Endothelial cell of umbilical vein (primary cell): ENCODE measurements at regions of chr19 and their contacts with region 1.

Region 1: GRCh38 chr19:5803752-5804515 is 933 bp upstream of the NRTN start:
- DNase-seq: peak; percentile 89
- H3K4me3 ChIP-seq: peak overlapping the region in 1 of 3 experiments; percentile 2
- H3K27ac ChIP-seq: no peak overlapping the region
- H3K4me1 ChIP-seq: peaks cover 5% of the 10 kb centered on the region
- H3K27me3 ChIP-seq: peaks cover 2 to 7% of the 10 kb centered on the region in 2 experiments
- CTCF ChIP-seq: peak; percentile 100
- POLR2A ChIP-seq: no peak

Region 2: DNA sequence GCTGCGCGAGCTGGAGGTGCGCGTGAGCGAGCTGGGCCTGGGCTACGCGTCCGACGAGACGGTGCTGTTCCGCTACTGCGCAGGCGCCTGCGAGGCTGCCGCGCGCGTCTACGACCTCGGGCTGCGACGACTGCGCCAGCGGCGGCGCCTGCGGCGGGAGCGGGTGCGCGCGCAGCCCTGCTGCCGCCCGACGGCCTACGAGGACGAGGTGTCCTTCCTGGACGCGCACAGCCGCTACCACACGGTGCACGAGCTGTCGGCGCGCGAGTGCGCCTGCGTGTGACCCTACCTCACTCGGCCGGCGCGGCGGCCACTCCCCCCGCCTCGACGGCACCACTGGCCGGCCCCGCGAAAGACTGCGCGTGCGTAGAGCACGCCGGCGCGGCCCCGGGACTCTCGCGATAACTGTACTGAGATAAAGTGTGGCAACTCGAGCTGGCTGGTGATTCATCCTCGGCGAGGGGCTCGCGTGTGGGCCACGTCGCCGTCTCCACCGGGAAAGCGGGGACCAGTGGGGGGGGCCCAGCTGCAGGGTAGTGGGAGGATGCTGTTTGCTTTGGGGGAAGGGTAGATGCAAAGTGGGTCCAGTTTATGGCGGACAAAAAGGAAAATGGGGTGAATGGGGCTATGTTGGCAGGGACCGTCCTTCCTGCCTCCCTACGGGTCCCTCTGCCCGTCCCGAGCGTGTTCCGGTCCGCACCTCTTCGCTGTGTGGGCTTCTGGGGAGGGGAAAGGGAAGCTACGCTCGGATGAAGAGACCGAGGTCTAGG is 24.1 kb after region 1 on chr19:
- CTCF ChIA-PET with region 1: interaction called, 42 read pairs
- POLR2A ChIA-PET with region 1: interaction called, 14 read pairs
- dilution Hi-C with region 1: no loop called
- intact Hi-C with region 1: loop called (anchors 2 kb)
- DNase-seq: peak; percentile 97
- H3K4me3 ChIP-seq: peak overlapping the region in 2 of 3 experiments; percentile 38 to 60
- H3K27ac ChIP-seq: peak overlapping the region; percentile 36
- H3K4me1 ChIP-seq: peaks cover 7% of the 10 kb centered on the region
- H3K27me3 ChIP-seq: peaks cover 0 to 3% of the 10 kb centered on the region in 2 experiments
- CTCF ChIP-seq: no peak
- POLR2A ChIP-seq: peak; percentile 95

Region 3: DNA sequence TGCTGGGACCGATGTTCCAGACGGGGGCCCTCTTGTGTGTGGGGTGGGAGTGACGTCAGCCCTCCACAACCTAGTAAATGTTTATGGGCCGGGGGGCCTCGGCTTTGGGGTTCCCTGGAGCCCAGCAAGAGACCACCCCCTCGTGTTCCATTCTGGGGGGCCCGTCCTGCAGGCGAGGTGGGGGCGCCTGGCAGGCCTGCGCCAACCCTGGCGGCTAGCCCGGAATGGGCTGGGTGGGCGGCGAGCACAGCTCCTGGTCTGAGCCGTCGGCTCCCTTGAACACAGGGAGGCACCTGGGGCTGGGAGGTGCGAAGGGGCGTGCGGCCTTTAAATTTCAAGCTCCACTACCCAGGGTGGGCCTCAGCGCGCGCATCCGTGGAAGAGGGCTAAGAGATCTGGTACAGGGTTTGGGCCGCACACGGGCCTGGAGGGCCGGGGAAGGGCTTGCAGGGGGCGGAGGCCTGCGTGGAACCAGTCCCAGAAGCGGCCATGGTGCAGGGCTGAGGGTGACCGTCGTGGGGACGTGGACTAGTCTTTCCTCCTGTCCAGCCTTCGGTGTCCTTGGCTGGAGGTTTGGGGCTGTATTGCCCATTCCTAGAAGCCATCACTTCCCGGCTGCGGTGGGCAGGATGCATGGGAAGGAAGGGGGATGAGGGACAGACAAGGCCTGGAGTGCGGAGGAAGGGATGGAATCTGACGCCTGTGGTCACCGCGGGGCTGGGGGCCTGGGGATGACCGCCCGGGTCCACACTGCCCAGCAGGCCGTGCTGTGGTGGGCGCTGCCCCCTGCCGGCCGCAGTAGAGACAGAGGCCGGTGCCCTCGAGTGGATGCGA is 88.2 kb after region 1 on chr19:
- CTCF ChIA-PET with region 1: interaction called, 76 read pairs
- POLR2A ChIA-PET with region 1: no interaction called
- dilution Hi-C with region 1: no loop called
- intact Hi-C with region 1: loop called (anchors 1 kb)
- DNase-seq: peak; percentile 33
- H3K4me3 ChIP-seq: no peak overlapping the region
- H3K27ac ChIP-seq: no peak overlapping the region
- H3K4me1 ChIP-seq: peaks cover 19% of the 10 kb centered on the region
- H3K27me3 ChIP-seq: no peaks in the 10 kb centered on the region
- CTCF ChIP-seq: peak; percentile 80 to 92
- POLR2A ChIP-seq: peak; percentile 35

Region 4: DNA sequence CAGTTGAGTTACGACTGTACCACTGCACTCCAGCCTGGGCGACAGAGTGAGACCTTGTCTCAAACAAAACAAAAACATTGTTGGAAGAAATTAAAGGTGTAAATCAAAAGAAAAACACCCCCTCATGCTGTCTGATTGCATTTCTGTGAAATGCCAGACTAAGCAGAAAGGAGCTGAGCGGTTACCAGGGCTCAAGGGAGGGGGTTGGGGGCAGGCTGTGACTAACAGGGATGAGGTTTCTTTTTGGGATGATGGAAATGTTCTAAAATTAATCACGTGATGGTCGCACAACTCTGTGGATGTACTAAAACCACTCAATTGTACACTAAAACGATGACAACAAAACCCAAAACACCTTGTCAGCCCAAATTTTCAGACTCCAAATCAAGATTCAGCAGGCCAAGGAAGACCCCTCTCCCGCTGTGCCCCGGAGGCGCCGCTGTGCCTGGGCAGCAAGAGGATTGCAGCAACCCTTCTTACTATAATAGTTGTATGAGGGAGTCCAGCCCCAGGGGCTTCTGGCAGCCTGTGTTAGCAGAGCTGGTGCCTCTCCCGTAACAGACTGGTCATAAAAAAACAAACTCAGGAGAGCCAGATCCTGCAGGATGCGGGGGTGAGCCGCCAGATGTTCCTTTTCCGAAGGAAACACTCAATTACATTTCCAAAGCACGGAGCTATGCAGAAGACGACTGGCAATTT is 131.0 kb after region 1 on chr19:
- CTCF ChIA-PET with region 1: interaction called, 12 read pairs
- POLR2A ChIA-PET with region 1: no interaction called
- dilution Hi-C with region 1: no loop called
- intact Hi-C with region 1: no loop called
- DNase-seq: peak; percentile 81
- H3K4me3 ChIP-seq: no peak overlapping the region
- H3K27ac ChIP-seq: peak overlapping the region; percentile 42
- H3K4me1 ChIP-seq: peaks cover 30% of the 10 kb centered on the region
- H3K27me3 ChIP-seq: no peaks in the 10 kb centered on the region
- CTCF ChIP-seq: no peak
- POLR2A ChIP-seq: no peak

Region 5: GRCh38 chr19:6014551-6015135 is 210.7 kb after region 1 on chr19:
- CTCF ChIA-PET with region 1: interaction called, 15 read pairs
- POLR2A ChIA-PET with region 1: no interaction called
- dilution Hi-C with region 1: no loop called
- intact Hi-C with region 1: no loop called
- DNase-seq: no peak
- H3K4me3 ChIP-seq: no peak overlapping the region
- H3K27ac ChIP-seq: peak overlapping the region; percentile 64
- H3K4me1 ChIP-seq: peaks cover 14% of the 10 kb centered on the region
- H3K27me3 ChIP-seq: no peaks in the 10 kb centered on the region
- CTCF ChIP-seq: no peak
- POLR2A ChIP-seq: no peak